ENCODE measurements at regions of chr1 and their contacts with region 1.

Region 1: GRCh38 chr1:113307771-113308445 is 82.4 kb upstream of the MAGI3 start:
- DNase-seq: no peak
- ATAC-seq: no peak
- H3K4me3 ChIP-seq: no peak overlapping the region
- H3K27ac ChIP-seq: no peak overlapping the region
- H3K4me1 ChIP-seq: no peaks in the 10 kb centered on the region
- H3K27me3 ChIP-seq: no peaks in the 10 kb centered on the region
- CTCF ChIP-seq: no peak

Region 2: DNA sequence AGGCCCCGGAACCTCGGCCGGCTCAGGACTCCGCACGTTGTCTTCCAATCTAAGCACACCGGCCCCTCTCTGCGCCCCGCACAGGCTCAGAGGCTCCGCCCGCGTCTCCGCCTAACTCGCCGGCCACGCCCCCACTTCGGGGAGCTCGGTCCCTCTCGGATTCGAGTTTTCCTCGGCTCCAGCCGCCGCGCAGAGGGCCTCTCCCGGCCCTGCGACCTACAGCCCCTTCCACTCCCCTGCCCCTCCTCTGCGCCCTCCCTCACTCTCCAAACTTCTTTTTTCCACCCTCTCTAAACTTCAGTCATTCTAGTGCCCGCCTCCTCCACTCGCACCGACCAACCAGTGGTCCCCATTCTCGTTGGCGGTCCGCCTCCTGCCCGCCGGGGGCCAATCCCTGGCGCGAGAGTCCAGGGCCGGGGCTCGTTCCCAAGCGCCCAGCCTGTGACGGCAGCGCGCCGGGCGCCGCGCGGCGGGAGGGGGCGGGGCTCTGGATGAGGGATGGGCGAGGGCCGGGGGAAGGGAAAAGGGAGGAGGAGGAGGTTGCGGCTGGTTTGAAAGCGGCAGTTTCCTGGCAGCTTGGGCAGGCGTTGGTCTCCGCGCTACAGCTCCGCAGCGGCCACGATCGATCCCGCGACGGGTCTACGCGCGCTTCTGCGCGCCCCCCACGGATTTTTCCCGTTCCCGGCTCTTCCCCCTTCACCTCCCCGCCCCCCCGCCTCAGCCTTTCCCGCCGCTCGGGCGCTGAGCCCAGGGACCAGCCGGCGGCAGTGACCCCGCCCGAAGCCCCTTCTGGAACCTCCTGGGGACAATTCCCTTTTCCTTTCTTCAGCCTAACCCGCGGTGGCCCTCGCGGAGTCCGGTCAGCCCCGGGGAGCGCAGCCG is 82.3 kb after region 1 on chr1 and contains the start of gene MAGI3:
- CTCF ChIA-PET with region 1: no interaction called
- POLR2A ChIA-PET with region 1: interaction called, 12 read pairs
- in situ Hi-C with region 1: no loop called
- intact Hi-C with region 1: no loop called
- DNase-seq: peak; percentile 81
- ATAC-seq: peak; percentile 95
- H3K4me3 ChIP-seq: peak within 1 kb of the TSS; percentile 74 to 89
- H3K27ac ChIP-seq: peak within 1 kb of the TSS; percentile 69
- H3K4me1 ChIP-seq: peaks cover 20% of the 10 kb centered on the region
- H3K27me3 ChIP-seq: no peaks in the 10 kb centered on the region
- CTCF ChIP-seq: no peak
- total RNA-seq, gene MAGI3: 10.9 TPM

Measured in Panc1 (cell line).